GM10248 (cell line): ENCODE measurements at regions of chr6 and their contacts with region 1.

Region 1: DNA sequence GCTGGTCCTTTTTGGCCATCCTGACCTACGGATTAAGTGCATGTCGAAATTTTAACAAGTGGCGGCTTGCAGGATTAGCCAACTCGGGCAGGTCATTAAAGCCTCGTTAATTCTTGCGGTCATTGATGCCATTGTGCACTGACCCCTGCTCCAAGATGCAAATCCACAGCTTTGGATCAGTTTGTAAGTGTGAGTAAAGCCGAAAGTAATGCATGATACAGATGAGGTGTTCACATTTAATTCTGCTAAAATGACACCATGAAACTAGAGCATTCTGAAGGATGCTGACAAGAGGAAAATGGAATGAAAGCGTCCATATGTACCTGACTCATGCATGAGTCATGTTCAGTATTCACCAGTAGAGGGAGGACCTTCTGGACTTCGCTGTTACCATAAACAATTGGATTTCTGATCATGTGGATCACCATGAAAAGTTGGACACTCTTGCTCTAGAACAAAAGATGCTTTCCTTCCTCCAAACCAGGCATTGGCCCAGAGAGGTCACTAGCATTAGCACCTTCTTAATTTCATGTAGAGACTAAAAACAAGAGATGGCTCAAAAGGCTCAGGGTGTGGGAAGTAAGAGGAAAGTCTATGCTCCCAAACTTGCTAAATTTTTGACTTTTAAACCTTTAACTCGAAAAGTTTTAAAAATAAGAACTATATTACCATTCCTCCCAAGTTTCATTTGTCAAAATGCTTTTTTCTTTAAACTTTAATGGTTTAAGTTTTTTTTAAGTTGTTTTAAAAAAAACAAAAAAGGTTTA is 48.0 kb downstream of the MUC22 start:
- DNase-seq: no peak
- CTCF ChIP-seq: peak; percentile 31

Region 2: DNA sequence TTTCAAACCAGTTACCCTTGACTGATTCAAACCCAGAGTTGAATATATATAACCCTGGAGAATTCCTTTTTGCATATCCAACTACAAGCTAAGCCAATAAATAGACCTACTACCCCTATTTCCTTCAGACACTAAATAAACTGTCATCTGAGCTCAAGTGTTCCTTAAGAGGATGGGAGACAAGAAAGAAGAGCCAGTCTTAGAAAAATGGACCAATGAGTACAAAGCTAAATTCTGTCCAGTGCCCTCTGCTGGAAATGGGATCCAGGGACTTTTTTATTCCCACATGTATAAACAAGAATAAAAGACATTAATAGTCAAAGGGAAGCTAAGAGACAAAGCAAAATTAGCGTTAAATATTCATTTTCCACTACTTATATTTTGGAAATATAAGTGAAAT is 446.1 kb before region 1 on chr6:
- CTCF ChIA-PET with region 1: no interaction called
- POLR2A ChIA-PET with region 1: no interaction called
- DNase-seq: no peak
- CTCF ChIP-seq: no peak

Region 3: GRCh38 chr6:31007694-31008093 is 50.6 kb before region 1 on chr6:
- CTCF ChIA-PET with region 1: no interaction called
- POLR2A ChIA-PET with region 1: no interaction called
- DNase-seq: no peak
- CTCF ChIP-seq: no peak

Region 4: DNA sequence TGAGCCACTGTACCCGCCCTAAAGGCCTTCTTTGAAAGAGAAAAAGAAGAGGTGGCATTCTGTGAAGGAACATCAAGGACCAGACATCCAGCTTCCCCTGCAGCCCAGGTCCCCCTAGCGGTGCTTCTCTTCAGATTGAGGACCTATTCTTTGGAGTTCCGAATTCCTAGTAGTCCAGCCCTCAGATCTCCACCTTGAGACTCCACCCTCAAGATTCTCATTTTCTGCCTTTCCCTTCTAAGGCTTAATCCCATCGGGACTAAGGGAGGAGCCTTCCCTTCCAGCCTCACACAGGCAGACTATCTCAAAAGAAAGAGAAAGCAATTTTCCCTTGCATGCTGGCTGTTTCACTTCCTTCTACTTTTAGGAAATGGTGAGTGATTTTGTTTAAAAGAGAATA is 15.5 kb before region 1 on chr6:
- CTCF ChIA-PET with region 1: interaction called, 26 read pairs
- POLR2A ChIA-PET with region 1: no interaction called
- DNase-seq: peak; percentile 39
- CTCF ChIP-seq: peak; percentile 55

Region 5: GRCh38 chr6:31068669-31069340 is 10.5 kb after region 1 on chr6:
- CTCF ChIA-PET with region 1: interaction called, 15 read pairs
- POLR2A ChIA-PET with region 1: no interaction called
- DNase-seq: peak; percentile 85
- CTCF ChIP-seq: peak; percentile 68